HepG2 (cell line): ENCODE measurements at regions of chr9 and their contacts with region 1.

Region 1: GRCh38 chr9:71249729-71250317 is 128.4 kb upstream of the TRPM3 start:
- DNase-seq: peak; percentile 61
- ATAC-seq: peak; percentile 85
- H3K4me3 ChIP-seq: no peak overlapping the region
- H3K27ac ChIP-seq: no peak overlapping the region
- H3K4me1 ChIP-seq: 0 out of 2 replicates have a peak, but pooled peaks cover 6% of the 10 kb centered on the region
- H3K27me3 ChIP-seq: no peaks in the 10 kb centered on the region; a peak in 1 of 5 replicates
- CTCF ChIP-seq: peak; percentile 84
- EP300 ChIP-seq: no peak
- POLR2A ChIP-seq: no peak
- RAD21 ChIP-seq: peak; percentile 77

Region 2: DNA sequence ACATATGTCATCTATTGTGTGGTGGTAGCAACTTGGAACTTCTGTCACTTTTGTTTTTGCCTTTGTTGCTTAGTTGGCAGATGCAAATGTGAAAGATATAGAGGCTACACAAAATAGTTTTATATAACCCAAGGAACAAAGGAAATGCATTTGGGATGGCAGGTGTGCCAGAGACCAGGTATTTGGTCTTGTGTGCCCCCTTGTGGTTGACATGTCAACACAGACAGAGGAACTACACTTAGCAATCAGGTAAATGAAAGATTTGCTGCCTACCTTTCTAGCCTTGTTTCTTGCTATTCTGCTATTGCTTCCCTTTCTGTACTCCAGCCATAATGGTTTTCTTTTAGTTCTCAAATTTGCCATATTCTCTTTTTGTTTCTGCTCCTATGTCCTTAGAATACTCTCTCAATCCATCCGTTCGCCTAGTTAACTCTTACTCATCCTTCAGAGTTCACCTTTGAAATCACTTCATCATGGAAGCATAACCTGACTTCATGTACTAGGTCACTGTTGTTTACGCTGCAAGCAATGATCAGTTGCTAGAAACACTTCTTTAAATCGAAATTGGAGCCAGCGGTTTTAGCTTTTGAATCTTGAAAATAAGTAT is 247.9 kb before region 1 on chr9:
- CTCF ChIA-PET with region 1: interaction called, 4 read pairs
- POLR2A ChIA-PET with region 1: no interaction called
- in situ Hi-C with region 1: no loop called
- intact Hi-C with region 1: loop called (anchors 1 kb)
- DNase-seq: peak; percentile 10
- ATAC-seq: peak; percentile 64; the same call in 2 of the 3 replicates
- H3K4me3 ChIP-seq: no peak overlapping the region
- H3K27ac ChIP-seq: no peak overlapping the region
- H3K4me1 ChIP-seq: no peaks in the 10 kb centered on the region
- H3K27me3 ChIP-seq: no peaks in the 10 kb centered on the region
- CTCF ChIP-seq: peak; percentile 66
- EP300 ChIP-seq: no peak
- POLR2A ChIP-seq: no peak
- RAD21 ChIP-seq: no peak